Activated CD4-positive, alpha-beta T cell treated with anti-CD3 and anti-CD28 coated beads, Interleukin-2, amount 10 ng/mL, durations not matched to agents 24 days and 14 days (primary cell): ENCODE measurements at regions of chr20 and their contacts with region 1.

Region 1: GRCh38 chr20:63537525-63538203 is 488 bp upstream of the PTK6 start:
- DNase-seq: peak; percentile 98
- H3K4me3 Mint-ChIP-seq: peak overlapping the region; percentile 83
- H3K27ac Mint-ChIP-seq: peak overlapping the region; percentile 91
- H3K4me1 Mint-ChIP-seq: peaks cover 12% of the 10 kb centered on the region
- H3K27me3 Mint-ChIP-seq: no peaks in the 10 kb centered on the region

Region 2: DNA sequence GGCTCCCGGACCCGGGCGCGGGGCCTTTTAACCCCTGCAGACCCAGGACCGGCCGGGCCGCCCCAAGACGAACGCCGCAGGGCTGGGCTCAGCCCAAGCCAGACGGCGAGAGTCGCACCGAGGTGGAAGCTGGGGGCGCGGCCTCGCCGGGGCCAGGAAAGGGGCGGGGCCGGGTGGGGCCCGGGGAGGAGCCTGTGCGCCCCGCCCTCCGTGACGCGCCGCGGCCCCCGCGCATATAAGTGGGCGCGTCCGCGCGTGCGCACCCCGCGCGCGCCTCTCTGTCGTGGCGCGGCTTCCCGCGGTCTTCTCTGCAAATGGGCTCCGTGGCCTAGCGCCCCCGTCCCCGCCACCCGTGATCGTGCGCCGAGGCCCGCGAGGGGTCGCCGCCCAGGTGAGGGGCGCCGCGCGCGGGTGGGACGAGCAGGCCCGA is 17.1 kb before region 1 on chr20 and contains the start of gene PPDPF:
- intact Hi-C with region 1: loop called (anchors 1 kb)
- DNase-seq: peak; percentile 95
- H3K4me3 Mint-ChIP-seq: peak within 1 kb of the TSS; percentile 83
- H3K27ac Mint-ChIP-seq: peak within 1 kb of the TSS; percentile 74
- H3K4me1 Mint-ChIP-seq: peaks cover 12% of the 10 kb centered on the region
- H3K27me3 Mint-ChIP-seq: peaks cover 8% of the 10 kb centered on the region
- total RNA-seq, gene PPDPF: 125 and 130 TPM in 2 replicates

Region 3: DNA sequence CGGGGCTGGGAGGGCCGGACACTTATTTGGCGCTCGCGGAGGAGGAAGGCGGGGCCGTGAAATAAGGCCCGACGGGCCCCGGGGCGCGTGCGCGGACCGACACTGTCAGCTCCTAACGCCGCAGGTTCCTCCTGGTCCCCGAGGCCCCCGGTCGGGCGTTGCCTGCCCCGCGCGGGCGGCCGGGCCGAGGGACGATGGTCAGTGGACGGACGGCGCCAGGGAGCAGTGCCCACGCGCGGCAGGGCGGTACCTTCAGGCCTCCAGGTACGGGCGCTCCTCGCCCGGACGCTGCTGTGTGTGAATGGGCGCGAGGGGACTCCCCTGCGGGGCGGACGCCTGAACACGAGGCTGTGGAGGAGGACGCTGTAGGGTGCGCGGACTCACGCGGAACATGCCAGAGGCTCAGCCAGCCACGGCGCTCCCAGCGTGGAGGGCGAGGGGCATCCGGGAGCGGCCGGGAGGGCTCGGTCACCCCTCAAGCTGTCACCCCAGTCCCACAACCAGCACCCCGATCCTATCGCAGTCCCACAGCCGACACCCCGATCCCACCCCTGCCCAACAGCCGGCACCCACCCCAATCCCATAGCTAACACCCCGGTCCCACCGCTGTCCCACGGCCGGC is 89.6 kb after region 1 on chr20:
- intact Hi-C with region 1: loop called (anchors 5 kb)
- DNase-seq: peak; percentile 98
- H3K4me3 Mint-ChIP-seq: peak overlapping the region; percentile 97
- H3K27ac Mint-ChIP-seq: peak overlapping the region; percentile 99
- H3K4me1 Mint-ChIP-seq: peaks cover 20% of the 10 kb centered on the region
- H3K27me3 Mint-ChIP-seq: no peaks in the 10 kb centered on the region

Region 4: GRCh38 chr20:63791497-63792156 is 254.0 kb after region 1 on chr20:
- intact Hi-C with region 1: loop called (anchors 2 kb)
- DNase-seq: no peak
- H3K4me3 Mint-ChIP-seq: no peak overlapping the region
- H3K27ac Mint-ChIP-seq: no peak overlapping the region
- H3K4me1 Mint-ChIP-seq: peaks cover 5% of the 10 kb centered on the region
- H3K27me3 Mint-ChIP-seq: peaks cover 19% of the 10 kb centered on the region

Region 5: GRCh38 chr20:63955827-63956663 is 418.4 kb after region 1 on chr20 and contains the start of gene UCKL1:
- intact Hi-C with region 1: loop called (anchors 1 kb)
- DNase-seq: peak; percentile 97
- H3K4me3 Mint-ChIP-seq: peak within 1 kb of the TSS; percentile 85
- H3K27ac Mint-ChIP-seq: peak within 1 kb of the TSS; percentile 88
- H3K4me1 Mint-ChIP-seq: peaks cover 28% of the 10 kb centered on the region
- H3K27me3 Mint-ChIP-seq: no peaks in the 10 kb centered on the region
- total RNA-seq, gene UCKL1: 48.1 and 49.5 TPM in 2 replicates

Region 6: GRCh38 chr20:64038565-64039292 is 501.1 kb after region 1 on chr20:
- intact Hi-C with region 1: loop called (anchors 5 kb)
- DNase-seq: peak; percentile 95
- H3K4me3 Mint-ChIP-seq: peak overlapping the region; percentile 79
- H3K27ac Mint-ChIP-seq: peak overlapping the region; percentile 80
- H3K4me1 Mint-ChIP-seq: peaks cover 48% of the 10 kb centered on the region
- H3K27me3 Mint-ChIP-seq: no peaks in the 10 kb centered on the region